ENCODE measurements at regions of chr19 and their contacts with region 1.

Region 1: GRCh38 chr19:54137086-54137921 is at the start of gene CNOT3:
- DNase-seq: peak; percentile 100
- H3K4me3 ChIP-seq: peak within 1 kb of the TSS; percentile 78
- CTCF ChIP-seq: no peak

Region 2: GRCh38 chr19:53961523-53962356 is 175.6 kb before region 1 on chr19:
- CTCF ChIA-PET with region 1: no interaction called
- POLR2A ChIA-PET with region 1: no interaction called
- DNase-seq: no peak
- H3K4me3 ChIP-seq: no peak overlapping the region
- CTCF ChIP-seq: no peak

Region 3: DNA sequence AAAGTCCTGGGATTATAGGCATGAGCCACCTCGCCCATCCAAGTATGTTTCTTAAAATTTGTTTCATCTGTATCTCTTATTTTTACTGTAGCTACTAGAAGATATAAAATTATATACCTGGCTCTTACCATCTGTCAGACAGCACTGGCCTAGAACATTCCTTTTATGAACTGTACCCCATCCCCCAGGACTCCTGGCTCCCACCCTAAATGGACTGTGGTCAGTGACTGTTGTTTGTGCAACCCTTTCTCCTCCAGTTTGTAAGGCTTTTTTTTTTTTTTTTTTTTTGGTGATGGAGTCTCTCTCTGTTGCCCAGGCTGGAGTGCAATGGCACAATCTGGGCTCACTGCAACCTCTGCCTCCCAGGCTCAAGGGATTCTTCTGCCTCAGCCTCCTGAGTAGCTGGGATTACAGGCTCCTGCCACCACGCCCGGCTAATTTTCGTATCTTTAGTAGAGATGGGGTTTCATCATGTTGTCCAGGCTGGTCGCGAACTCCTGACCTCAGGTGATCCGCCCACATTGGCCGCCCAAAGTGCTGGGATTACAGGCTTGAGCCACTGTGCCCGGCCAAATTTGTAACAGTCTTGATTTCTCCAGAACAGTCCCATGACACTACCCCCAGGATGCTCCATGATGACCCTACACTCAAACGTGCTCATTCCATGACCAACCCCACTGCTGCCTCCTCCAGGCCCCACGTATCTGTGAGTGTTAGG is 32.1 kb before region 1 on chr19:
- CTCF ChIA-PET with region 1: no interaction called
- POLR2A ChIA-PET with region 1: no interaction called
- DNase-seq: no peak
- H3K4me3 ChIP-seq: no peak overlapping the region
- CTCF ChIP-seq: no peak

Region 4: DNA sequence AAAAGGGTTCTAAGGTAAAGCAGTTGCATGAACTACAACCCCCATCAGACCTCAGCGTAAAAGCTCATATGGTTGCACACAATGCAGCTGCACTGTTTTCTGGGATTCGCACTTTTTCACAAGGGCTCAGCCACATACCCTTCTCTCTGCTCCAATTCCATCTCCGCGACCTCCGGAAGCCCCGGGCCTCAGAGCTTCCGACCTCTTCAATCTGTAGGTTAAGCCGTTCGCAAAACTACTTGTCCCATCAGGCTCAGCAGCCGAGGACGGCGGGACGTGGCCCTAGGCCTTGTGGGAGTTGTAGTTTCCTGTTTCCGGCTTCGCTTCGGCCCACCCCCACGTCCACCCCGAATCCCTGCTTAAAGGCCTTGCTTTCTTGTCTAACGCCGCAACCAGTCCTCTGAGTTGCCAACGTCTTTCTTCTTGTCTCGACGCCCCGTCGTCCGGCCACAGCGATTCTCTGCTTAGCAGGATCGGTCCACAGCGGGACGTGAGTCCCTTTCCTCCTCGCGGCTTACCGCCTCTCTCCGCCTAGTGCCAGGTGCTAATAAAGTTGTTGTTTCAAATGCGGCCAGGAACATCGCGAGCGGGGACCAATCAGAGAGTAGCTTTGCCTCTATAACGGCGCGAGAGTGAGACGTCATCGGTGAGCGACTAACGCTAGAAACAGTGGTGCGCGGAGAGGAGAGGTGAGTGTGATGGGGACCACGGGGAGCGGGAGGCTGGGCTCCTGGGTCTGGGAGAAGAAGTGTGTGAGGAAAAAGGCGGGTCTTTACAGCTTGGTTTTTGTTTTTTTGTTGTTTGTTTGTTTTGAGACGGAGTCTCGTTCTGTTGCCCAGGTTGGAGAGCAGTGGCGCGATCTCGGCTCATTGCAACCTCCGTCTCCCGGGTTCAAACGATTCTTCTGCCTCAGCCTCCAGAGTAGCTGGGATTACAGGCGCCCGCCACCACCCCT is 21.9 kb before region 1 on chr19 and contains the starts of genes PRPF31 and TFPT:
- CTCF ChIA-PET with region 1: interaction called, 3 read pairs
- POLR2A ChIA-PET with region 1: interaction called, 21 read pairs
- DNase-seq: peak; percentile 87
- H3K4me3 ChIP-seq: peak within 1 kb of the TSS; percentile 83
- CTCF ChIP-seq: no peak

Measured in AG04449 (cell line).